Activated CD8-positive, alpha-beta T cell treated with anti-CD3 and anti-CD28 coated beads for 36 hours (primary cell): ENCODE measurements at regions of chr6 and their contacts with region 1.

Region 1: DNA sequence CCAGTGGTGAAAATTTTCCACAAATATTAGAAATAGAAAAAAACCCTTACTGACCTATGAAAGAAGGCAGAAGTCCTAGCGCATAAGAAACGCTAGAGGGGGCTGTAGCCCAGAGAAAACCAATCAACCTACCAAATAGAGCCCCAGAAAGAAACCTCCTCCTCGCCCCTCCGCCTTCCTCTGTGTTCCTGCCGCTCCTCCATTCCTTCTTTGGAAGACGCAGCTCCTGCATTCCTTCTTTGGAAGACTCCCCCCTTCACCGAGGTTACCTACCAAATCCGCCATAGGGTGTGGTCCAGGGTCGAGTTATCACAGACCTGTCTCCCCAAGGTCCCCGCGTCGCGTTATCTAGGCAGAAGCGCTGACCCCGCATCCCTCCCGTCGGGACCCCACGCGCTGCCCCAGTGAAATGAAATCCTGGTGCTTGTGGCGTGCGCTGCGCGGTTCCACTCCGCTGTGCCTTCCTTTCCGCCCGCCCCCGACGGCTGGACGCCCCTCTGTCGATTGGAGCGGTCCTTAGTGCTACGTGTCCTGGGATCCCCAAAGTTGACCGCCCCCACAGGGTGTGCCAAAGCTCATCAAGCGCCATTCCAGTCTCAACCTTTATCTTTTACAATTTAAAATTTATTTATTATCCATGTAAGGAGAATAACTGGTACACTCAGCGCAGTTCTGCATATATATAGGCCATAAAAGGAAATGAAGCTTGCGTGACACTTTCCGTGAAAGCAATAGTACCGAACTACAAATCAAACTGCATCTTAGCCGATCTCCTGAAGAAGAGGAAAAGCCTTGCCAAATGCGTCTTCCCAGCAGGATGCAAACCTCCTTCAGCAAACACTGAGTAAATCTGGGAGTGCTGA is 13.0 kb downstream of the RPP21 start:
- DNase-seq: peak; percentile 74
- ATAC-seq: peak; percentile 88
- H3K4me3 Mint-ChIP-seq: peak overlapping the region; percentile 75
- H3K27ac Mint-ChIP-seq: no peak overlapping the region
- H3K4me1 Mint-ChIP-seq: peaks cover 1% of the 10 kb centered on the region
- H3K27me3 Mint-ChIP-seq: peaks cover 41% of the 10 kb centered on the region
- CTCF ChIP-seq: peak; percentile 87

Region 2: GRCh38 chr6:30169658-30170614 is 188.0 kb before region 1 on chr6:
- CTCF ChIA-PET with region 1: no interaction called
- POLR2A ChIA-PET with region 1: no interaction called
- intact Hi-C with region 1: no loop called
- DNase-seq: peak; percentile 22
- ATAC-seq: peak; percentile 87
- H3K4me3 Mint-ChIP-seq: no peak overlapping the region
- H3K27ac Mint-ChIP-seq: no peak overlapping the region
- H3K4me1 Mint-ChIP-seq: peaks cover 12% of the 10 kb centered on the region
- H3K27me3 Mint-ChIP-seq: peaks cover 55% of the 10 kb centered on the region
- CTCF ChIP-seq: peak; percentile 88

Region 3: GRCh38 chr6:30405934-30406333 is 48.0 kb after region 1 on chr6:
- CTCF ChIA-PET with region 1: interaction called, 10 read pairs
- POLR2A ChIA-PET with region 1: no interaction called
- intact Hi-C with region 1: no loop called
- DNase-seq: no peak
- ATAC-seq: no peak
- H3K4me3 Mint-ChIP-seq: no peak overlapping the region
- H3K27ac Mint-ChIP-seq: no peak overlapping the region
- H3K4me1 Mint-ChIP-seq: peaks cover 8% of the 10 kb centered on the region
- H3K27me3 Mint-ChIP-seq: peaks cover 38% of the 10 kb centered on the region
- CTCF ChIP-seq: no peak